Endothelial cell of umbilical vein (primary cell): ENCODE measurements at regions of chr22 and their contacts with region 1.

Region 1: GRCh38 chr22:50361688-50362087 is 18.6 kb downstream of the PPP6R2 start:
- DNase-seq: no peak
- H3K4me3 ChIP-seq: no peak overlapping the region
- H3K27ac ChIP-seq: no peak overlapping the region
- H3K4me1 ChIP-seq: no peaks in the 10 kb centered on the region
- H3K27me3 ChIP-seq: no peaks in the 10 kb centered on the region
- CTCF ChIP-seq: no peak
- POLR2A ChIP-seq: no peak

Region 2: DNA sequence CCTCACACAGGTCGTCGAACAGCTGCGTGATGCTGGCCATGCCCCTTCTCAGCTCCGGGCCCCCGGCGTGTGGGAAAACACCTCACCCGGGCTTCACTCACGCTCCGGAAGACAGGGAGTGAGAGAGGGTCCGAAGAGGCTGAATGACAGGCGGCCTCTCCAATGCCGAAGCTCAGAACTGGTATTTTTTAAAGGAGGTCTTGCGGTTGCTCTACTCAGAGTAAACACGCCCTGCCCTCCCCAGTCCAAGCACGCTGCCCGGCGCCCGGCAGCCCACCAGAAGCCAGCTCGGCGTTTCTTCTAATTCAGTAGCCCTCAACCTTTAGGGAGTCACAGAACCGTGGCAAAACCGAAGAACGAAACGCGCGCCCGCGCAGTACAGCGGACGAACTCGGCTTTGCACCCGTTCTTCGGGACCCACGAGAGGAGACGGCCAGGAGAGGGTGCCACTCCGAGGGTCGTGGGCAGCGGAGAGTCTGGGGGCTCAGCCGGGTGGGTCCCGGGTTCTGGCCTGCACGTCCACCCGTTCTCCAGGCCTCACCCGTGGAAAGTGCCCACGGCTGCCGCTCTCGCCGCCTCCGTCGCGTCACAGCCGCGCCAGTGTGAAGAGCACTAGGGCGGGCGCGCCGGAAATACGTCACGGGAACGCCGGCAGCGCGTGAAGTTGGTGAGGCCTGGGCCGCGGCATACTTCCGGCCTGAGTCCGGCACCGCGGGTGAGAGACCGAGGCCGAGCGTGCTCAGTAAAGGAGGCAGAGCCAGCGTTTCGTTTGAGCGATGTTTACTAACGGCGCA is 117.1 kb before region 1 on chr22 and contains the start of gene TUBGCP6:
- CTCF ChIA-PET with region 1: interaction called, 10 read pairs
- POLR2A ChIA-PET with region 1: no interaction called
- dilution Hi-C with region 1: no loop called
- intact Hi-C with region 1: no loop called
- DNase-seq: peak; percentile 88
- H3K4me3 ChIP-seq: peak within 1 kb of the TSS; percentile 55 to 98 (median 90)
- H3K27ac ChIP-seq: peak within 1 kb of the TSS; percentile 73
- H3K4me1 ChIP-seq: peaks cover 26% of the 10 kb centered on the region
- H3K27me3 ChIP-seq: no peaks in the 10 kb centered on the region
- CTCF ChIP-seq: no peak
- POLR2A ChIP-seq: peak; percentile 83
- total RNA-seq, gene TUBGCP6: 41.5 and 45.3 TPM in 2 replicates